HEK293T (cell line): ENCODE measurements at regions of chr17 and their contacts with region 1.

Region 1: GRCh38 chr17:39209317-39210092 is 9.4 kb downstream of the RPL19 start:
- DNase-seq: no peak

Region 2: GRCh38 chr17:39194089-39194984 is 15.2 kb before region 1 on chr17:
- CTCF ChIA-PET with region 1: interaction called, 4 read pairs
- POLR2A ChIA-PET with region 1: interaction called, 24 read pairs
- DNase-seq: peak; percentile 67

Region 3: DNA sequence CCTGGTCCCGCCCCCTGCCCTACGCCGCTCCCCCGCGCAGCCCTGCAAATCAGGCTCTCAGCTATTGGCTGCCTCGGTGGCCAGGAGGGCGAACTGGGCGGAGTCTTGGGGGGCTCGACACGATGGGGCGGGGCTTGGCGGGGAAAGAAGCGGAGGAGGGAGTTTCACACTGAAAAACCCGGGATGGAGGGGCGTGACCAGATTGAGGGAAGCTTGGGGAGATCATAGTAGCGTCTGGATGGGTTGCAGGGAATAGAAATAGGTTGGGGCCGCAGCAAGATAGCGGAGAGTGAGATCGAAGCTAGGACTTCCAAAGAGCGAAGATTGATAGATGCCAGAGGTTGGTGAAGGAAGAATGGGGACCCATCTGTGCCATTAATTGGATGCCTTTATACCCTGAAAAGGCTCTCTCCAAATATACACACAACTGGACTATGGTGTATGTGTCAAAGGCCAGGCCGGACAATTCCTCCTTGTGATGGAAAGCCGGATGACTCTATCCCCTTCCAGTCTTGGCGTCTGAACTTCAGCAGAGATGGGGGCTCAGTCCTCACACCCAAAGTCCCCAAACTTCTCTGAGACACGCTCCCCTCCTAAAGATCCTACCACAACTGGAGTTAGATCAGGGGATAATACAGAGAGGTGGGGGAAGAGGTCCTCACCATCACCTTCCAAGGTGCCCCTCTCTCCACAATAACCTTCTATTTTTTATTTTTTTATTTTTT is 16.6 kb after region 1 on chr17:
- CTCF ChIA-PET with region 1: interaction called, 40 read pairs
- POLR2A ChIA-PET with region 1: interaction called, 12 read pairs
- DNase-seq: peak; percentile 83

Region 4: DNA sequence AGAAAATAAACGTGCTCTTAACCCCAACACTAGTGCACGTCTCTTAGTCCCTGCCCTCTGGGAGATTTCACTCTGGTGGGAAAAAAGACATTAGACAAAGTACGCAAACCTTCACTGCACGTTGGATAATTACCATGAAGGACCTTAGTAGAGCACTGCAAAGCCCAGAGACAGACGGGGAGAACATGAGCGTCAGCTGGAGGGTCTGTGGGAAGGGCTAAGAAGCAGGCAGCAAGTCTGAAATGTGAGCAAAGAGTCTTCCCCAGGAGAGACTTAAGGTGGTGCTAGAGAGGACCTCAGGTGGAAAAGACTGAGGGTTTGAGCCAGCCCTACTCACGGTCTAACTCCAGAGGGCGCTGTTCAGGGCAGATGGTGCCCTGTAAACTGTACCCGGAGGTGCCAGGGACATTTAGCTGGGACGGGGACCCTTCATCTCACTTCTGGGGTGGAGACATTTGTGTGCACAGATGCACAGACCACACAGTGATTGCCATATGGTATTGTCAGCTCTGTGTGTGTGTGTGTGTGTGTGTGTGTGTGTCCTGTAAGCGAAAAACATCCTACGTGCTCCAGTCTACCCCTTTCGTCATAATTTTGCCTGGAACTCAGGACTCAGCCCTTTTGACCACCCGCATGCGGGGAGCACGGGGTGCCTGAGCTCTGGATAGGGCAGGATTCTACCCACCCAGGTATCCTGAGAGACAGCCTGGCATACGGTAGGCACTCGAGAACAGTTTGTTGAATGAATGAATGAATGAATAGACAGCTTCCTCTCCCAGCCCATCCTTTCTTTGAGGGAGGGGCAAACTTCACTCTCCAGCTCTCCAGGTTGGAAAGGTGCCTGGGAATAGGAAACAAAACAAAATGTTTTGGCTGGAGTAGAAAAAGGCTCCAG is 26.3 kb after region 1 on chr17:
- CTCF ChIA-PET with region 1: interaction called, 96 read pairs
- POLR2A ChIA-PET with region 1: interaction called, 9 read pairs
- DNase-seq: peak; percentile 80

Region 5: DNA sequence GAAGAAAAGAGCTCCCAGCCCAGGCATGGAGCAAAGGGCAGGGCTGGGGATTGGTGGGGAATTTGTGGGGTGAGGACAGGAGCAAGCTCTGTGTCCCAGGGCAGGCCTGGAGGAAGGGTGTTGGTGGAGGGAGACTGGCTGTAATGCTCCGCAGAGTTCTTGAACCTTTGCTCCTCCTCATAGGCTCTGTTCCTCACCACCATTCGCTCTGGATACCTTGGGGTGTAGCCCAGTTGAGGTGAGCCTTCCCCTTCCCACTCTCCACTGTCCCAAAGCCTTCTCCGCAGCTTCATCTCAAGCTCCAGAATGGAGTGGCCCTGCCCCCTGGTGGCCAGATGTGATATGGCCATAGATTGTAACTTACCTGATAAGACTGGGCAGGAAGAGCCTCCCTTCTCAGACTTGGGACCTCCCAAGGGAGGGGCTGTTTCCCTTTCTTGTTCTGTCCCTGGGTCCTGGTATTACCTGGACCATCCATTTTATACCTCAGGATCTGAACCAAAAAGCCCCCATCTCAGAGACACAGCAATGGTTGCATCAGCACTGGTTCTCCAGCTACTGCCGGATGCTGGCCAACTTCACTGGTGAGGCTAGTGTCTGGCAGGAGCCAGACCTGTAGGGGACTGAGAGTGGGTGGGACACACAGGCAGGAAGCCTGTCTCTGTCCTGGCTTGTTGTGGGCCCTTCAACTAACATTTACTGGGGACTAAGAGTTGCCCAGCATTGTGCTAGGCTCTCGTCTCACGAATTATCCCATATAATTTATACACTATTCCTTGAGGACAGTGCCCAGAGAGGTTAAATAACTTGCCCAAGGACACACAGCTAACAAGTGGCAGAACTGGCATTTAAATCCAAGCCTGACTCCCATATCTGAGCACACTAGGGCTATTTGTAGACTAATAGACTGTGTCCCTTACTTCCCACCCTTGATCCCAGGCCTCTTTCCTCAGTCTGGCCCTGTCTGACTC is 35.4 kb after region 1 on chr17:
- CTCF ChIA-PET with region 1: interaction called, 96 read pairs
- POLR2A ChIA-PET with region 1: interaction called, 14 read pairs
- DNase-seq: peak; percentile 67

Region 6: GRCh38 chr17:39365242-39365641 is 155.7 kb after region 1 on chr17:
- CTCF ChIA-PET with region 1: no interaction called
- POLR2A ChIA-PET with region 1: no interaction called
- DNase-seq: no peak